ENCODE measurements at regions of chr13 and their contacts with region 1.

Region 1: DNA sequence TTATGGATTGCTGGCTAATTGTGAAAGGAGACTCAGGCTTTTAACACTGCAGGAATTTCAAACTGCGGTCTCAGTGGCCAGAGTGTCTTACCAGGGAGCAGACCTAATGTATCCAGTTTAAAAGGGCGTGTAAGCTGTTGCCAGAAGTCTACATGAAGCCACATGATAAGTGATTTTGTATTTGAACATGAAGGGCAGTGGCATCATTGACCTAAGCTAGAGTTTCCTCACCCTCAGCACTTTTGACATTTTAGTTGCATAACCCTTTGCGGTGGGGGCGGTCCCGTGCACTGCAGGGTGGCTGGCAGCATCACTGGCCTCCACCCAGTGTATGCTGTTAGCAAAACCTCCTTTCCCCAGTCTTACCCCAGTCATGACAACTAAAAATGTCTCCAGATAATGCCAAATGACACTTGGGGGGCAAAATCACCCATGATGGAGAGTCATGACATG is 23.7 kb upstream of the GPR18 start:
- DNase-seq: peak in 7 of 9 donors; percentile 45 to 65 (median 55)
- ATAC-seq: peak; percentile 85
- H3K4me3 ChIP-seq: peak overlapping the region; percentile 10
- H3K4me3 Mint-ChIP-seq: peak overlapping the region; percentile 36 to 85 (median 72)
- H3K27ac ChIP-seq: peak overlapping the region; percentile 73
- H3K27ac Mint-ChIP-seq: peak overlapping the region; percentile 86 to 99 (median 97)
- H3K4me1 ChIP-seq: peaks cover 83 to 87% of the 10 kb centered on the region in 2 donors
- H3K4me1 Mint-ChIP-seq: peaks cover 64 to 99% (median 94%) of the 10 kb centered on the region in 7 donors
- H3K27me3 ChIP-seq: no peaks in the 10 kb centered on the region
- H3K27me3 Mint-ChIP-seq: no peaks in the 10 kb centered on the region

Region 2: GRCh38 chr13:97307882-97308624 is 1973.8 kb before region 1 on chr13:
- CTCF ChIA-PET with region 1: no interaction called
- POLR2A ChIA-PET with region 1: no interaction called
- intact Hi-C with region 1: no loop called
- DNase-seq: no peak
- ATAC-seq: no peak
- H3K4me3 ChIP-seq: no peak overlapping the region
- H3K4me3 Mint-ChIP-seq: no peak overlapping the region
- H3K27ac ChIP-seq: no peak overlapping the region
- H3K27ac Mint-ChIP-seq: no peak overlapping the region
- H3K4me1 ChIP-seq: no peaks in the 10 kb centered on the region
- H3K4me1 Mint-ChIP-seq: peaks cover 0 to 21% (median 6%) of the 10 kb centered on the region in 7 donors
- H3K27me3 ChIP-seq: no peaks in the 10 kb centered on the region
- H3K27me3 Mint-ChIP-seq: no peaks in the 10 kb centered on the region

Region 3: GRCh38 chr13:99296398-99296797 is 14.6 kb after region 1 on chr13:
- CTCF ChIA-PET with region 1: interaction called, 7 read pairs
- POLR2A ChIA-PET with region 1: interaction called, 208 read pairs
- intact Hi-C with region 1: loop called in 1 of 2 experiments (anchors 1 kb)
- DNase-seq: peak in 6 of 9 donors; percentile 49 to 69 (median 57)
- ATAC-seq: peak; percentile 59
- H3K4me3 ChIP-seq: peak overlapping the region; percentile 28
- H3K4me3 Mint-ChIP-seq: peak overlapping the region; percentile 73 to 91 (median 82)
- H3K27ac ChIP-seq: peak overlapping the region; percentile 73
- H3K27ac Mint-ChIP-seq: peak overlapping the region; percentile 89 to 98 (median 93)
- H3K4me1 ChIP-seq: peaks cover 78 to 81% of the 10 kb centered on the region in 2 donors
- H3K4me1 Mint-ChIP-seq: peaks cover 60 to 94% (median 88%) of the 10 kb centered on the region in 7 donors
- H3K27me3 ChIP-seq: no peaks in the 10 kb centered on the region
- H3K27me3 Mint-ChIP-seq: no peaks in the 10 kb centered on the region

Region 4: DNA sequence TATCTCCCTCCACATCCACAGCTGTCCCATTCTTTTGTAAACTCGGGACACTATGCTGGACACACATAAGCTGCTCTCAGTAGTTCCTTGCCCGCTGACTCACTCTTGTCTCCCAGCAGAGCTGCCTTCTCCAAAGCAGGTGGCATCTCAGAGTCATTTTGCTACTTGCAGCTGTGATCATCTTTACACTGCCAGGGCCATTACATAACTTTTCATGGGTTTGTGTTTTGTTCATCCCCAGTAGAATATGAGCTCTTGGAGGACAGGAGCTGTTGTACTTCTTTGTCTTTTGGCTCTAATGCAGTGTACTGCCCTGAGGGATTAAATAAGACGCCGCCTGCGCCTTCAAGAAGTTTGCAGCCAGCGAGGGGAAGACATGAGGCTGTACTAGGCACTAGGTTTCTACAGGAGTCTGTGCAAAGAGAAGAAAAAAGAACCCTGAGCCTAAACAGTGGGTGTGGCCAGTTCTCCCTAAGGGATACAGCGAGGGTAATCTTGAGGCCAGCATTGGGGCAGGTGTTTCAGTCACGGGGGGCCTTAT is 66.1 kb after region 1 on chr13:
- CTCF ChIA-PET with region 1: interaction called, 4 read pairs
- POLR2A ChIA-PET with region 1: interaction called, 12 read pairs
- intact Hi-C with region 1: no loop called
- DNase-seq: no peak
- ATAC-seq: no peak
- H3K4me3 ChIP-seq: no peak overlapping the region
- H3K4me3 Mint-ChIP-seq: peak overlapping the region in 2 of 10 donors; percentile 17 to 48
- H3K27ac ChIP-seq: peak overlapping the region; percentile 41
- H3K27ac Mint-ChIP-seq: peak overlapping the region; percentile 30 to 99 (median 96)
- H3K4me1 ChIP-seq: peaks cover 30 to 36% of the 10 kb centered on the region in 2 donors
- H3K4me1 Mint-ChIP-seq: peaks cover 42 to 98% (median 89%) of the 10 kb centered on the region in 7 donors
- H3K27me3 ChIP-seq: no peaks in the 10 kb centered on the region
- H3K27me3 Mint-ChIP-seq: no peaks in the 10 kb centered on the region

Region 5: GRCh38 chr13:99380921-99381645 is 99.2 kb after region 1 on chr13:
- CTCF ChIA-PET with region 1: interaction called, 5 read pairs
- POLR2A ChIA-PET with region 1: interaction called, 11 read pairs
- intact Hi-C with region 1: no loop called
- DNase-seq: peak in 8 of 9 donors; percentile 55 to 73 (median 62)
- ATAC-seq: peak; percentile 51
- H3K4me3 ChIP-seq: peak overlapping the region; percentile 1
- H3K4me3 Mint-ChIP-seq: peak overlapping the region; percentile 63 to 85 (median 76)
- H3K27ac ChIP-seq: peak overlapping the region; percentile 85
- H3K27ac Mint-ChIP-seq: peak overlapping the region; percentile 94 to 99 (median 98)
- H3K4me1 ChIP-seq: peaks cover 77 to 88% of the 10 kb centered on the region in 2 donors
- H3K4me1 Mint-ChIP-seq: peaks cover 48 to 100% (median 98%) of the 10 kb centered on the region in 7 donors
- H3K27me3 ChIP-seq: no peaks in the 10 kb centered on the region
- H3K27me3 Mint-ChIP-seq: no peaks in the 10 kb centered on the region